ENCODE measurements at regions of chr4 and their contacts with region 1.

Region 1: DNA sequence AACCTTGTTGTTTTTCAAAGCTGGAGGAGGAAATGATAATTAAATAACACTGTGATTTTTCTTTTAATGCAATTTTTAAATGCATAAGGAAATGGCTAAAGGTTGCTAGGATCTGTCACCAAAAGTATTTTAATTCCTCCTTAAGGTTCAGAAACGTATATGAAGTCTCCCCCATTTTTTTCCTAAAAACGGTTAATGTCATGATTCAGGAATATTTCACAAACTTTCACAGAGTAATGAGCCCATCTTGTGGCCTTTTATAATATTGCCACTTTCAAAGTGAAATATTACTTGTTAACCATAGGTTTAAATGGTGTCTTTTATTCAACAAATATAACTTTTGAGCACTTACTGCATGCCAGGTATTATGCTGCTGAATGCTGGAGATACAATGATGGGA is 99.5 kb upstream of the USP38 start:
- DNase-seq: peak; percentile 59
- H3K4me3 ChIP-seq: no peak overlapping the region
- H3K27ac ChIP-seq: no peak overlapping the region
- H3K4me1 ChIP-seq: peaks cover 29% of the 10 kb centered on the region
- H3K27me3 ChIP-seq: no peaks in the 10 kb centered on the region

Region 2: DNA sequence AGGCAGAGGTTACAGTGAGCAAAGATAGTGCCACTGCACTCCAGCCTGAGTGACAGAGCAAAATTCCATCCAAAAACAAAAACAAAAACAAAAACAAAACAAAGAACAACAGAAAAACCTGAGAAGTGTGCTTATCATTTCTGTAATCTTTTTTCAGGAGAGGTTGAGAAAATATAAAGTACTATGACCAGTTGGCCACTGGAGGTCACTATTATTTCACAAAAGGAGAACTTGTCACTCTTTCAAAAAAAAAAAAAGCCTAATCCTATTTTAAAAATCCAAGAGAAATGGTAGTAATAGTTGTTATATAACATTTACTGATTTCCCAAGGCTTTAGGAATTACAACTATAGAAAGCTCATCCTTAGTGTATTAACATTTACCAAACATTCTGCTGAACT is 1927.0 kb before region 1 on chr4:
- in situ Hi-C with region 1: loop called (anchors 25 kb)
- DNase-seq: peak; percentile 68
- H3K4me3 ChIP-seq: no peak overlapping the region
- H3K27ac ChIP-seq: no peak overlapping the region
- H3K4me1 ChIP-seq: peaks cover 9% of the 10 kb centered on the region; the same call in 1 of the 2 replicates
- H3K27me3 ChIP-seq: no peaks in the 10 kb centered on the region

Measured in GM23248 (cell line).